ENCODE measurements at regions of chr3 and their contacts with region 1.

Region 1: DNA sequence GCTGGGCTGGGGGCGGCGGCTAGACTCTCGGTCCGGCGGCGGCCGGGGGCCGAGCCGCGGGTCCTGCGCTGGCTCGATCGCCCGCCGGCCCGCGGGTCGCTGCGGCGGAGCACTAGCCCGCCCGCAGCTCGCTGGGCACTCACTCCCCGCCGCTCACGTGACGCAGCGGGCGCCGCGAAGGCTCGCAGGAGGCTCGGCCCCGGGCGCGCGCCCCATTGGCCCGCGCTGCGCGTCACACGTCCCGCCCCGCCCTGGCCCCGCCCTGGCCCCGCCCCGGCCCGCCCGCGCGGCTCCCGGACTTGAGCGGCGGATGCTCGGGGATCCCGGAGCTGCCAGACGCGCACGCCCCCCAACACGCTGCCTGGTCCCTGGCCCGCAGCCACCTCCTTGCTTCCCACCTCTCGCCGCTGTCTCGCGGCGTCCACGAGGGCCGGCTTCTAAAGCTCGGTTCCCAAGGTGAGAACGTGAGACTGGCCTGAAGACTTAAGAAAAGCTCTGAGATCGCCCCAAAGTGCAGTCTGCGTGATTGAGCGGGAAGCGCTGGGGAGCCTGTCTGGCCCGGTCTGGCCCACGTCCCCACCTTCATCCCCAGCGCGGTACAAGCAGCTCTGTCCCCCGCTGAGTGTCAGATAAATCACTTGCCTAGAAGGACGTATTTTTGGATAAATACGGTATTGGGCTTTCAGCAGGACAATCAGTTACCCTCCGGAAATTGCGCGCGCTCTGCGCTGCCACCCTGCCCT is at the start of gene KLF15:
- DNase-seq: peak; percentile 92
- H3K4me3 ChIP-seq: peak within 1 kb of the TSS; percentile 89
- H3K27ac ChIP-seq: peak within 1 kb of the TSS; percentile 87 to 98
- H3K4me1 ChIP-seq: peaks cover 31% of the 10 kb centered on the region
- H3K27me3 ChIP-seq: no peaks in the 10 kb centered on the region
- CTCF ChIP-seq: no peak
- POLR2A ChIP-seq: no peak
- total RNA-seq, gene KLF15: 32.0 to 36.1 TPM

Region 2: GRCh38 chr3:126267226-126267975 is 90.1 kb before region 1 on chr3:
- intact Hi-C with region 1: loop called (anchors 5 kb)
- DNase-seq: peak; percentile 91
- H3K4me3 ChIP-seq: peak overlapping the region; percentile 24 to 33
- H3K27ac ChIP-seq: peak overlapping the region; percentile 80 to 87
- H3K4me1 ChIP-seq: peaks cover 36% of the 10 kb centered on the region
- H3K27me3 ChIP-seq: no peaks in the 10 kb centered on the region
- CTCF ChIP-seq: no peak
- POLR2A ChIP-seq: no peak

Region 3: DNA sequence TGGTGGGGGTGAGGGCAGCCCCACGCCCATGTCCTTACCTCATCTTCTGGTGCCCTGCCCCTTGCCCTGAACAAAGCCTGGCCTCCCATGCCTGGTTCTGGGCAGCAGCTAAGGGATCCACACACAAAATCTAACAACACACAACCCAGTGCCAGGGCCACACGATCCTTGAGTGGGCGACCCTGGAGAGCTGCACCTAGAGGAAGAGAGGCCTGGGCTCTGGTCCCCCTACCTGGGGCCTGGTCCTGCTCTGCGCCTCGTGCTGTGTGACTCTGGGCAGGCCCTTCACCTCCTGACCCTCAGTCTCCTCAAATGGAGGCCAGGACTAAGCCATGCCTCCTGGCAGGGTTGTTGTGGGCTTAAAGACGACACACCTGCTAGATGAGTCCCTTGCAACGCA is 221.2 kb after region 1 on chr3:
- intact Hi-C with region 1: no loop called
- DNase-seq: no peak
- H3K4me3 ChIP-seq: no peak overlapping the region
- H3K27ac ChIP-seq: no peak overlapping the region
- H3K4me1 ChIP-seq: no peaks in the 10 kb centered on the region
- H3K27me3 ChIP-seq: no peaks in the 10 kb centered on the region
- CTCF ChIP-seq: no peak
- POLR2A ChIP-seq: no peak

Measured in testis (tissue), 5 donors.